Heart left ventricle (tissue), 16 donors: ENCODE measurements at regions of chr22 and their contacts with region 1.

Region 1: DNA sequence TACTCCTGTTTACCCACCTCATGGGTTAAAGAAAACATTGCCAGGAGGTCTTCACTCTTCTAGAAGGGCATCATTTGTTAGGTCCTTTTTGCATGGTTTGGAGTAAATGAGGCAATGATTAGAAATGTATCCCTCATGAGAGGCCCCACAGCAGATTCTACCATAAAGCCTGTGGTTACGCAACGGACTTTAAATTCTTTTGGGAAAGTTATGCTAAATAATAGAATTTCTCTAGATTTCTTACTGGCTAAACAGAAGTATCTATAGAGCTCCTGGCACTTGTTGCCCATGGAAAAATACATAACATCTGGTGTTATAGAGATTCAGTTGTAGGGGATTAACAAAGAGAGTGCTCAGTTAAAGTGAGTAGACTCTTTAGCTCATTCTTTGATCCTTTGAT is 15.1 kb upstream of the ATXN10 start:
- DNase-seq: no peak
- ATAC-seq: no peak
- H3K4me3 ChIP-seq: no peak overlapping the region
- H3K27ac ChIP-seq: no peak overlapping the region
- H3K4me1 ChIP-seq: no peaks in the 10 kb centered on the region
- H3K27me3 ChIP-seq: peaks cover 0 to 3% (median 0%) of the 10 kb centered on the region in 9 donors
- CTCF ChIP-seq: no peak
- POLR2A ChIP-seq: no peak

Region 2: DNA sequence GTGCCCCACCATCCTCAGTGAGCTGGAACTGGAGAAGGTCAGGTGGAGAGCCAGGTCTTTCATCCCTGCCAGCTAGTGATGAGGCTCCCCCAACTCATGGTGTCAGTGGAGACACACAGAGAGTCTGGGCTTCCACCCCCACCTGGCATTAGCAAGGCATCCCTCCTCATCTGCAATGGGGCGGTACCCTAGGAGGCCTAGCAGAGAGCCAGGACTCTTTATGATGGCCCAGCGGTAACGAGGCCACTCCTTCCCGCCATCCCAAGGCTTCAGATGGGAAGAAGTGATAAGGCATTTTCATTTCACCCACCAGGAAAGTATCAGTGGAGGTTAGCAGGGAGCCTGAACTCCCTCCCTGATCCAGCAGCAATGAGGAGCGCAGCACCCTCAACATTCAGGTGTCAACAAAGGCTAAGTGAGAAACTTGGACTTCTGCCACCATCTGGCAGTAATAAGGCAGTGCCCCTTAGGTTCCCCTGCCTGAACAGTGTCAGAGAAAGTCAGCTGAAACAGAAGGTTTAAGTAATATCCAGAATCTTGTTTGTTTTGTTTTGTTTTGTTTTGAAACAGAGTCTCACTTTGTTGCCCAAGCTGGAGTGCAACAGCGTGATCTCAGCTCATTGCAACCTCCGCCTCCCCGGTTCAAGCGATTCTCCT is 194.4 kb before region 1 on chr22:
- intact Hi-C with region 1: no loop called
- DNase-seq: no peak
- ATAC-seq: no peak
- H3K4me3 ChIP-seq: no peak overlapping the region
- H3K27ac ChIP-seq: no peak overlapping the region
- H3K4me1 ChIP-seq: peaks cover 0 to 19% (median 4%) of the 10 kb centered on the region in 12 donors
- H3K27me3 ChIP-seq: no peaks in the 10 kb centered on the region
- CTCF ChIP-seq: no peak
- POLR2A ChIP-seq: no peak

Region 3: DNA sequence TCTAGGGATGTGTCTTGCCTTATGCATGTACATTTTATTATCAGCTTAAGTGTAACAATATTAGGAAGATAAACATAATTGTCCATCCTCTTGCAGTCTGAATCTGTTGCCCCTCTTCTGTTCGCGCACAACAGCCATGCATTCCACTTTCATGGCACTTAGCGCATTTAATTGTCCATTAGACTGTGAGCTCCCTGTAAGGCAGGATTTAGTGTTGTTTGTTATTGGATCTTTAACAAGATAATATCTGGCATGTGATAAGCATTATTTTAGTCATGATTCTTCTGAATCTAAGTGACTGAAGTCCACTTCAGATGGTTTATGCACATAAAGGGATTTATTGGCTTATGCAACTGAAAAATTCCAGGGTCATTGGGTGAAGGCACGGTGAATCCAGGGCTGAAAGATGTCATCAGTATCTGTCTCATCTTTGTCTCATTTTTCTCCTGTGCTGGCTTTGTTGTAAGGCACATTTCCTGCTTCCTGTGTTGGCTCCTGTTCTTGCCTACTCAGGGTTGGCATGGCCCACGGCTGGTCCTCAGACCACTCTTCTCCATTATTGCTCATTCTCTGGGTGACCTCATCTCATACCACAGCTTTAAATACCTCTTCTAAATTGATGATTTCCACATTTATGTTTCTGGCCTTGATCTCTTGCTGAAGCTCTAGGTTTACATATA is 52.6 kb after region 1 on chr22:
- intact Hi-C with region 1: no loop called
- DNase-seq: no peak
- ATAC-seq: no peak
- H3K4me3 ChIP-seq: no peak overlapping the region
- H3K27ac ChIP-seq: peak overlapping the region in 1 of 12 donors; percentile 20
- H3K4me1 ChIP-seq: peaks cover 0 to 43% (median 11%) of the 10 kb centered on the region in 12 donors
- H3K27me3 ChIP-seq: no peaks in the 10 kb centered on the region
- CTCF ChIP-seq: no peak
- POLR2A ChIP-seq: no peak

Region 4: GRCh38 chr22:45831394-45831793 is 174.8 kb after region 1 on chr22:
- intact Hi-C with region 1: loop called in 1 of 10 experiments (anchors 10 kb)
- DNase-seq: no peak
- ATAC-seq: no peak
- H3K4me3 ChIP-seq: no peak overlapping the region
- H3K27ac ChIP-seq: no peak overlapping the region
- H3K4me1 ChIP-seq: no peaks in the 10 kb centered on the region
- H3K27me3 ChIP-seq: no peaks in the 10 kb centered on the region
- CTCF ChIP-seq: peak in 9 of 12 donors; percentile 8 to 39 (median 22)
- POLR2A ChIP-seq: no peak